Activated CD8-positive, alpha-beta memory T cell treated with anti-CD3 and anti-CD28 coated beads, Interleukin-2, amount 10 ng/mL, durations not matched to agents 7 days and 5 days (primary cell): ENCODE measurements at regions of chr10 and their contacts with region 1.

Region 1: GRCh38 chr10:70461215-70461986 is 17.2 kb upstream of the PALD1 start:
- DNase-seq: peak; percentile 67
- ATAC-seq: peak; percentile 81
- H3K4me3 Mint-ChIP-seq: no peak overlapping the region
- H3K27ac Mint-ChIP-seq: no peak overlapping the region
- H3K4me1 Mint-ChIP-seq: peaks cover 2% of the 10 kb centered on the region
- H3K27me3 Mint-ChIP-seq: peaks cover 57% of the 10 kb centered on the region

Region 2: GRCh38 chr10:70323697-70324338 is 137.6 kb before region 1 on chr10:
- CTCF ChIA-PET with region 1: no interaction called
- DNase-seq: no peak
- ATAC-seq: no peak
- H3K4me3 Mint-ChIP-seq: peak overlapping the region; percentile 53
- H3K27ac Mint-ChIP-seq: peak overlapping the region; percentile 89
- H3K4me1 Mint-ChIP-seq: peaks cover 41% of the 10 kb centered on the region
- H3K27me3 Mint-ChIP-seq: no peaks in the 10 kb centered on the region

Region 3: GRCh38 chr10:70478191-70479164 is 17.1 kb after region 1 on chr10 and contains the start of gene PALD1:
- CTCF ChIA-PET with region 1: interaction called, 13 read pairs
- DNase-seq: no peak
- ATAC-seq: peak; percentile 27
- H3K4me3 Mint-ChIP-seq: peak within 1 kb of the TSS; percentile 48
- H3K27ac Mint-ChIP-seq: peak within 1 kb of the TSS; percentile 43
- H3K4me1 Mint-ChIP-seq: peaks cover 34% of the 10 kb centered on the region
- H3K27me3 Mint-ChIP-seq: peaks cover 66% of the 10 kb centered on the region
- total RNA-seq, gene PALD1: 0.26 to 0.41 TPM

Region 4: DNA sequence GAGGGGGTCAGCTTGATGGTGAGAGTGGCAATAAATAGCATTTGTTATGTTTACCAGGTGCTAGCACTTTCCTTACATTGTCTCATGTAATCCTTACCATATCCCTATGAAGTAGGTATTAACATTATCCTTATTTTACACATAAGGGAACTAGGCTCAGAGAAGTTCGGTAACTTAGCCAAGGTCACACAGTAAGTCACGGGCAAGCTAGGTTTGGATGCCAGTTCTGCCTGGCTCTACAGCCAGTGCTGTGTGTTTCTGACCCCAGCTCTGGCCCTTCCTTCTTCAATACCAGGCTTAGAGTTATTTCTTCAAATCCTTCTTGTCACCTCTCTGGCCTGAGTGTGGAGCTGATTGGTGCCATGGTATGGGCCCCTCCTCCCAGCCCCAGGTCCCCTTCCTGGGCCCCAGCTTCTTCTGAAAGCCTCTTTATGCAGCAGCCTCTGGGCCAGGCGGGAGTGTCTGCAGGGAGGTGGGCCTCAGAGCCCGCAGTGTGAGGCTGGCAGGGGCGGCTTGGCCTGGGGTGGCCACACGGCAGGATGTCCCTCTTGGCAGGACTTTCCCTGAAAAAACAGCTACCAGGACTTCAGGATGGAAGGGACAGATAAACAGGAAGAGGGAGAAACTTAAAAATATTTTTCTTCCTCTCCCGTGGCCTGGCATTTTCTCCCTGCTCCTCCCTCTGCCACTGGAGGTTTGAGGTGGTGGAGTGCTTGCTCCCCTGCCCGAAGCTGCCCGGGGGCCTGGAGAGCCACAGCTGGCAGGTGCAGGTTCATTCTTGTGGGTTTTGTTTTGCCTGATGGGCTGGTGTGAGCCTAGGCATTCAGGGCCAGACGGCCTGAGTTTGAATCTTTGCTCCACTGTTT is 37.8 kb after region 1 on chr10:
- CTCF ChIA-PET with region 1: interaction called, 10 read pairs
- DNase-seq: no peak
- ATAC-seq: no peak
- H3K4me3 Mint-ChIP-seq: no peak overlapping the region
- H3K27ac Mint-ChIP-seq: no peak overlapping the region
- H3K4me1 Mint-ChIP-seq: peaks cover 26% of the 10 kb centered on the region
- H3K27me3 Mint-ChIP-seq: peaks cover 22% of the 10 kb centered on the region

Region 5: GRCh38 chr10:70528726-70529362 is 67.4 kb after region 1 on chr10:
- CTCF ChIA-PET with region 1: interaction called, 14 read pairs
- DNase-seq: no peak
- ATAC-seq: no peak
- H3K4me3 Mint-ChIP-seq: no peak overlapping the region
- H3K27ac Mint-ChIP-seq: no peak overlapping the region
- H3K4me1 Mint-ChIP-seq: no peaks in the 10 kb centered on the region
- H3K27me3 Mint-ChIP-seq: no peaks in the 10 kb centered on the region

Region 6: DNA sequence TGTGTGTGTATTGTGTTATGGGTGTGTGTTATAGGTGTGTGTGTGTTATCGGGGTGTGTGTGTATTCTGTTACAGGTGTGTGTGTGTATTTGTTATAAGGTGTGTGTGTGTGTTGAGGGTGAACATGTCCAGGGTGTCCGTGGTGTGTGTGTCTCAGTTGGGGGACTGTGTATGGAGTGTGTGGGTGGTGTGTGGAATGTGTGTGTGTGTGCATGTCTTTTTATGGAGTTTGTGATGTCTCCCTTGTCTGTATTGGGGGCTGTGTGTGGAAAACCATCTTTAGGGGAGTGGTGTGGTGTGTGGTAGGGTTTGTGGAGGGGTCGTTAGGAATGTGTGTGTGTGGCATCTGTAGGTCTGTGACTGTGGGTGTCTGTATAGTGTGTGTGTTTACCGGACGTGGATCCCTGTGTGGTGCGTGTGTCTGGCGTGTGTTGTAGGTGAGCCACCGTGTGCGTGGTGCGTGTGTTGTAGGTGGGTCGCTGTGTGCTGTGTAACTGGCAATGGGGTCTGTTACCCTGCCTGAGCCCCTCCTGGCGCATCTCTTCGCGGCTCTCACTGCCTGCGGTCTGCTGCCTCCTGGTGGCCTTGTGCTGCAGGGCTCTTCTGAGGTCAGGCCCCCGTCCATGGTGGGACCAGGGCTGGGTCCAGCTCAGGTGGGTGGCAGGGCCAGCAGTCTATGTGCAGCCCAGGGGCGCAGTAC is 78.8 kb after region 1 on chr10:
- CTCF ChIA-PET with region 1: interaction called, 15 read pairs
- DNase-seq: no peak
- ATAC-seq: peak; percentile 60
- H3K4me3 Mint-ChIP-seq: no peak overlapping the region
- H3K27ac Mint-ChIP-seq: no peak overlapping the region
- H3K4me1 Mint-ChIP-seq: no peaks in the 10 kb centered on the region
- H3K27me3 Mint-ChIP-seq: peaks cover 14% of the 10 kb centered on the region

Region 7: GRCh38 chr10:70549962-70550458 is 88.6 kb after region 1 on chr10:
- CTCF ChIA-PET with region 1: interaction called, 20 read pairs
- DNase-seq: peak; percentile 83
- ATAC-seq: peak; percentile 93
- H3K4me3 Mint-ChIP-seq: no peak overlapping the region
- H3K27ac Mint-ChIP-seq: no peak overlapping the region
- H3K4me1 Mint-ChIP-seq: peaks cover 6% of the 10 kb centered on the region
- H3K27me3 Mint-ChIP-seq: no peaks in the 10 kb centered on the region